Right cardiac atrium (tissue), 5 donors: ENCODE measurements at regions of chr5 and their contacts with region 1.

Region 1: GRCh38 chr5:37412515-37413277 is 33.6 kb downstream of the WDR70 start:
- DNase-seq: no peak
- ATAC-seq: peak; percentile 71 to 82
- H3K4me3 ChIP-seq: no peak overlapping the region
- H3K27ac ChIP-seq: no peak overlapping the region
- H3K4me1 ChIP-seq: no peaks in the 10 kb centered on the region
- H3K27me3 ChIP-seq: no peaks in the 10 kb centered on the region

Region 2: GRCh38 chr5:37501012-37501551 is 88.4 kb after region 1 on chr5:
- intact Hi-C with region 1: no loop called
- DNase-seq: no peak
- ATAC-seq: no peak
- H3K4me3 ChIP-seq: no peak overlapping the region
- H3K27ac ChIP-seq: no peak overlapping the region
- H3K4me1 ChIP-seq: no peaks in the 10 kb centered on the region
- H3K27me3 ChIP-seq: no peaks in the 10 kb centered on the region

Region 3: GRCh38 chr5:38193015-38193581 is 780.4 kb after region 1 on chr5:
- intact Hi-C with region 1: loop called in 1 of 4 experiments (anchors 10 kb)
- DNase-seq: peak; percentile 65 to 87 (median 78)
- ATAC-seq: peak; percentile 73 to 83
- H3K4me3 ChIP-seq: no peak overlapping the region
- H3K27ac ChIP-seq: no peak overlapping the region
- H3K4me1 ChIP-seq: no peaks in the 10 kb centered on the region
- H3K27me3 ChIP-seq: no peaks in the 10 kb centered on the region